Activated T-helper 1 cell treated with anti-CD3 and anti-CD28 coated beads, Interleukin-12 subunit alpha, Interleukin-12 subunit beta, Interleukin-2, Interleukin-4 antibody, amounts not matched to agents 30 ng/mL and 10 ng/mL and 1 ng/mL, durations not matched to agents 14 hours and 24 hours and 36 hours (primary cell): ENCODE measurements at regions of chr6 and their contacts with region 1.

Region 1: GRCh38 chr6:43454696-43455530 is 435 bp downstream of the DLK2 start:
- DNase-seq: peak; percentile 60
- H3K4me3 Mint-ChIP-seq: peak overlapping the region; percentile 74
- H3K27ac Mint-ChIP-seq: peak overlapping the region; percentile 34
- H3K4me1 Mint-ChIP-seq: peaks cover 11% of the 10 kb centered on the region
- H3K27me3 Mint-ChIP-seq: peaks cover 30% of the 10 kb centered on the region

Region 2: DNA sequence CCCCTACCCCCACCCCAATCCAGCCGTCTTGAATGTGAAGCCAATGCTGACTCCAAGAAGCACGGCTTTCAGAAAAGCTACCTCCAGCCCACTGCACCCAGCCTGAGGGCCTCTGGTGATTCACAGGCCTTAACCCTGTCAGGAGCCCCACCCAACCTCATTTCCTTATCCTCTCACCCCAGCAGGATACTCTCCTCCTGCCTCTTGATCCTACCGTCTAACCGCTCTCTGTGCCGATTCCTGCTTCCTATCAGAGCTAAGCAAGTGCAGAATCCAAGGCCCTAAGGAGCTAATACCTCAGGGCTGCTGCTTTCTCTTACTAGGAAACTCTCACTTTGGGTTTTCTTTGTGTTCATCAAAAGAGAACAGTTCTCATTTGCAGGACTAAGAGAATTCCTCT is 1050.4 kb before region 1 on chr6:
- intact Hi-C with region 1: no loop called
- DNase-seq: no peak
- H3K4me3 Mint-ChIP-seq: peak overlapping the region; percentile 77
- H3K27ac Mint-ChIP-seq: peak overlapping the region; percentile 95
- H3K4me1 Mint-ChIP-seq: peaks cover 80% of the 10 kb centered on the region
- H3K27me3 Mint-ChIP-seq: no peaks in the 10 kb centered on the region

Region 3: GRCh38 chr6:43318011-43318410 is 136.9 kb before region 1 on chr6:
- intact Hi-C with region 1: no loop called
- DNase-seq: no peak
- H3K4me3 Mint-ChIP-seq: no peak overlapping the region
- H3K27ac Mint-ChIP-seq: no peak overlapping the region
- H3K4me1 Mint-ChIP-seq: no peaks in the 10 kb centered on the region
- H3K27me3 Mint-ChIP-seq: peaks cover 16% of the 10 kb centered on the region

Region 4: DNA sequence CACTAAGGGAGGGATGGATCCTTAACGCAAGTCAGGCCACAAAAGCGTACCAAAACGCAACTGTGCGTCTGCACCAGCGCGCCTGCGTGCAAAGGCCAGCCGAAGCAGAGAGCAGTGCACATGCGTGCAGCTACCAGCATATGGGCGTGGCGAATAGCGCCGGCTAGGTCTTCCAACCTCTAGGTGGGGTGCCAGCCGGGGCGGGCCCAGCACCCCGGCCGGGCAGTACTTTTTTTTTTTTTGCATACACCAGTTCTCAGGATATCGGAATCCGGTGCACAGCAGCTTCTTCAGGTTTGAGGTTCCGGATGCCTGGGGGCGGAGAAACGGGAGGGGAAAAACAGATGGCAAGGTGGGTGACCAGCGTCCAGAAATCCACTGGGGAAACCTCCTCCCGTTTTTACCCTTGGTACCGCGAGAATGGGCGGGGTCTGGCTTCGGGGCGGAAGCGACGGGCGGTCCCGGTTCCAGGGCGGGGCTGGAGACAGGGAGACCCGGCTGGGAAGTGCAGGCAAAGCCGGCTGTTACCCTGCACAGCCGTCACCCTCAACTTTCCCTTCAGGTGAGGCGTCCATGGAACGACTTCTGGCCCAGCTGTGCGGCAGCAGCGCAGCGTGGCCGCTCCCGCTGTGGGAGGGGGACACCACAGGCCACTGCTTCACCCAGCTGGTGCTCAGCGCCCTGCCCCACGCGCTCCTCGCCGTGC is 27.4 kb before region 1 on chr6 and contains the start of gene ABCC10:
- intact Hi-C with region 1: loop called (anchors 1 kb)
- DNase-seq: peak; percentile 93
- H3K4me3 Mint-ChIP-seq: peak within 1 kb of the TSS; percentile 96
- H3K27ac Mint-ChIP-seq: peak within 1 kb of the TSS; percentile 96
- H3K4me1 Mint-ChIP-seq: peaks cover 17% of the 10 kb centered on the region
- H3K27me3 Mint-ChIP-seq: no peaks in the 10 kb centered on the region
- total RNA-seq, gene ABCC10: 40.5 and 43.6 TPM in 2 replicates

Region 5: DNA sequence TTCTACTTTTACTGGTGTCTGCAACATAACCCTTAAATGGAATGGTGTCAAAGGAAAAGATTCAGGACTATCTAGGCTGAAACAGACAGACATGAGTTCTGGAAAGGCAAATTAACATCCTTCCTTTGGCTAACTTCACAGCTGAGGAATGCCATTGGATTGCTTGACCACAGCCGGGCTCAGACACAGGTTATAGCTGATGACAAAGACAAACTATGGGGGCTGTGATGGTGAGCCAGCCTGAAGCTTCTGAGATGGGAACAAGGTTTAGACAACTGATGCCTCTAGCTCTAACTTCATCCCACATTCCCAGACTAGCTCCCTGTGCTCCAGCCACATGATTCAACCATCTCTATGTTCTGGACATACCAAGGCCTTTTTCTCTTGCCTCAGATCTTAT is 77.3 kb after region 1 on chr6:
- intact Hi-C with region 1: no loop called
- DNase-seq: no peak
- H3K4me3 Mint-ChIP-seq: no peak overlapping the region
- H3K27ac Mint-ChIP-seq: no peak overlapping the region
- H3K4me1 Mint-ChIP-seq: no peaks in the 10 kb centered on the region
- H3K27me3 Mint-ChIP-seq: no peaks in the 10 kb centered on the region